A673 (cell line): ENCODE measurements at regions of chr7 and their contacts with region 1.

Region 1: DNA sequence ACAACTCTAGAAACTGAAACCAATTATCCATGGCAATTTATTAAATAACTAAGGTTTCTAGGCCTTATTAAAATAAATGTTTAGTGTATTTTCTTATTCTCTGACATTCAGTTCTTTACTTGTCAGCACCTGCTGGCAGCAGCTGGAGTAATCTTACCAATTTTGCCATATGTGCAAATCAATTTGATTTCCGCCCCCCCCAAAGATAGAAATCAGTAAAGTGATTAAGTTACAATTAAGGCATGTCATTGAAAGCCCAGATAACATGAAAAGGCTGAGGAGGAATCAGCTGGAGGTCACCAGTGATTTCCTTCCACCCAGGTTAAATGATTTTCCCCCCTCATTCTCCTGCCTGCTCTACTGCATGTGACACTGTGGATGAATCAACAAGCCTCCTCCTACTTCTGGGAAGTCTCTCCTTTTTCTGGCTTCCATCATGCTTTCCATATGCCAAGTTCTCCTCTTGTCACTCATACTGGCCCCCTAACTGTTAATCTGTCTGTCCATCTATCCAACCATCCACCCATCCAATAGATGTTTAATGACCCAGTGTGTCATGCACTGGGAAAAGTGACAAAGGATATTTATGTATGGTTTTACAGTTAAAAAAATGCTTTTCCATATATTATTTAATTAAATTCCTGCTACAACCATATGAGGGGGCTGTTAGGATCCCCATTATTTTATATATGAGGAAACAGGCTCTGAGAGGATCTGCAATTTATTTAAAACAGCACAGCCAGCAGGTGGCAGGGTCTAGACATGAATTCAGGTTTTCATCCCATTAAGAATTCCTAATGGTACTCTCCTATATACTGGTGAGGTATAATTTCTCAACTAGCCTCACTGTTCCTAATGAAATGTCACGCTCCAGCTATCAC is 116.5 kb downstream of the ATXN7L1 start:
- DNase-seq: peak; percentile 86
- H3K4me3 ChIP-seq: no peak overlapping the region
- H3K27ac ChIP-seq: peak overlapping the region; percentile 67
- H3K4me1 ChIP-seq: peaks cover 70% of the 10 kb centered on the region
- H3K27me3 ChIP-seq: no peaks in the 10 kb centered on the region
- CTCF ChIP-seq: peak; percentile 81

Region 2: DNA sequence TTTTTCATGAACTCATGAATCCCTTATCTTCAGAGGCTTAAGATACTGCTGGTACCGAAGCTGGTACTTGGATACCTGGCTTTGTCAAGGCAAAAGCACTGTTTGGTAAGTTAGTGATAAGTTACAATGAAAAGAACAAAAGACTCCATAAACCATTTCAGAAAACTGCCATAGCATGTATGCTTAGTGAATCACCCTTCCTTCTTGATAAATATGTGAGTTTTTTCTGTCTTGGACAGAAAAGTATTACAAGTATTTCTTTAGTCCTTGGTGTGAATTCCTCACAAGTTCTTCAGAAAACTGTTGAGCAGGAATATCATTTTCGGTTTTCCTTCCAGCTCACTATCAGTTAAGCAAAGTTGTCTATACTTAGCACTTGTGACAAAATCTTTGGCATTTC is 263.4 kb before region 1 on chr7:
- CTCF ChIA-PET with region 1: no interaction called
- POLR2A ChIA-PET with region 1: no interaction called
- intact Hi-C with region 1: no loop called
- DNase-seq: no peak
- H3K4me3 ChIP-seq: no peak overlapping the region
- H3K27ac ChIP-seq: no peak overlapping the region
- H3K4me1 ChIP-seq: no peaks in the 10 kb centered on the region
- H3K27me3 ChIP-seq: no peaks in the 10 kb centered on the region
- CTCF ChIP-seq: no peak

Region 3: DNA sequence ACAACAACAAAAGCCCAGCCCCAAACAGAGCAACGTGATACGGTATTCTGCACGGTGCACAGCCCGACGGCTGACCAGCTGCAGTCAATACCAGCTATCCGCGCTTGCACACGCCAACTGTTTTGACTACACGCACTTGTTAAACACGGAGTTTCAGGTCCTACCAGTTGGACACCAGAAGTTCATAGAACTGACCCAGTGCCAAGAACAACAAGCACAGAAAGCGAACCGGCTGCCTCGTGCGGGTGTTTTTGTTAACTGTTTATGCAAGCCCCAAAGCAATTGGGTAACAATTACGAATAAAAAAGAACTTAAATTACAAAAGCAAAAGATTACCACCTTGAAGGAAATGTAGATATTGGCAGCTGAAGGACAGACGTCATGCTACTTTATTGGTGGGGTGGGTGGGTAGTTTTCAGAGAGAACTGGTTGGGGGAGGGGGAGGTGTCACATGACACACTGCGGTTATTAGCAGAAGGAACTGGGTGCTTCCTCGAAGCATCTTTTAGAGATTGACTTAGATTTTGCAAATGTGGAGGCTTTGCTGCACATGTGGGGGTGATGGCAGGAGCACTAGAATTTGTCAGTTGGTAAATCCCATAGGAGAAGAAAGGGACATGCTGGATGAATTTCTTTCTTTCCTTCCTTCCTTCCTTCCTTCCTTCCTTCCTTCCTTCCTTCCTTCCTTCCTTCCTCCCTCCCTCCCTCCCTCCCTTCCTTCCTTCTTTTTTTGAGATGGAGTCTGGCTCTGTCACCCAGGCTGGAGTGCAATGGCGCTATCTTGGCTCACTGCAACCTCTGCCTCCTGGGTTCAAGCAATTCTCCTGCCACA is 68.0 kb before region 1 on chr7:
- CTCF ChIA-PET with region 1: interaction called, 3 read pairs
- POLR2A ChIA-PET with region 1: no interaction called
- intact Hi-C with region 1: loop called (anchors 1 kb)
- DNase-seq: peak; percentile 97
- H3K4me3 ChIP-seq: peak overlapping the region; percentile 48
- H3K27ac ChIP-seq: peak overlapping the region; percentile 98
- H3K4me1 ChIP-seq: peaks cover 45% of the 10 kb centered on the region
- H3K27me3 ChIP-seq: no peaks in the 10 kb centered on the region
- CTCF ChIP-seq: no peak

Region 4: GRCh38 chr7:105934572-105935185 is 174.8 kb after region 1 on chr7:
- CTCF ChIA-PET with region 1: interaction called, 4 read pairs
- POLR2A ChIA-PET with region 1: no interaction called
- intact Hi-C with region 1: loop called (anchors 5 kb)
- DNase-seq: peak; percentile 46
- H3K4me3 ChIP-seq: no peak overlapping the region
- H3K27ac ChIP-seq: no peak overlapping the region
- H3K4me1 ChIP-seq: peaks cover 41% of the 10 kb centered on the region
- H3K27me3 ChIP-seq: no peaks in the 10 kb centered on the region
- CTCF ChIP-seq: peak; percentile 50

Region 5: DNA sequence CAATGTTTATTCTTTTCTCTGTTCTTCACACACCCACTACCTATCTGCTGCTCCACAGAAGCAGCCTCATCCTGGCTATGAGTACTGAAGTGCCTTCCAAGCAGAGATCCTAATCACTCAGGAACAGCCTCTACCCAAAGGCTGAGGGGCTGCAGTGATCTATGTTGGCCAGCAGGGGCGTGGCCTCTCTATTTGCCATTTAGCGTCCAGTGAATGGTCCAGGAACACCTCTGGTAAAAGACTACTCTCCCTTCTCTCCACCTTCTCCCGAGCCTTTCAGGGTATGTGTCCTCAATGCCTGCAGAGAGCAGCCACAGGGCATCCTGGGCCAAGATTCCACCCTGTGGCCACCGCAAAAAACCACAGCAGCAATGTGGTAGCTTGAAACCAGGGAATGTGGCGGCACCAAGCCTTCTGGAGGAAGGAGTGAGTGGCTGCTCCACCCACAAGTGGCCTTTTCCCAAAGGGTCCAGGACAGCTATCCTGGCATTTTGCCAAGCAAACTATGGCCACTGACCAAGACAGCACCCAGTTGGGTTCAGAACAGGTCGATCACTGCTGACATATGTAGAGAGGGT is 281.3 kb after region 1 on chr7:
- CTCF ChIA-PET with region 1: interaction called, 7 read pairs
- POLR2A ChIA-PET with region 1: no interaction called
- intact Hi-C with region 1: loop called (anchors 1 kb)
- DNase-seq: peak; percentile 71
- H3K4me3 ChIP-seq: no peak overlapping the region
- H3K27ac ChIP-seq: no peak overlapping the region
- H3K4me1 ChIP-seq: peaks cover 34% of the 10 kb centered on the region
- H3K27me3 ChIP-seq: no peaks in the 10 kb centered on the region
- CTCF ChIP-seq: peak; percentile 80

Region 6: GRCh38 chr7:106166655-106167342 is 406.9 kb after region 1 on chr7:
- CTCF ChIA-PET with region 1: no interaction called
- POLR2A ChIA-PET with region 1: no interaction called
- intact Hi-C with region 1: loop called (anchors 5 kb)
- DNase-seq: peak; percentile 77
- H3K4me3 ChIP-seq: no peak overlapping the region
- H3K27ac ChIP-seq: no peak overlapping the region
- H3K4me1 ChIP-seq: peaks cover 7% of the 10 kb centered on the region
- H3K27me3 ChIP-seq: no peaks in the 10 kb centered on the region
- CTCF ChIP-seq: peak; percentile 89